ENCODE measurements at regions of chr4 and their contacts with region 1.

Region 1: DNA sequence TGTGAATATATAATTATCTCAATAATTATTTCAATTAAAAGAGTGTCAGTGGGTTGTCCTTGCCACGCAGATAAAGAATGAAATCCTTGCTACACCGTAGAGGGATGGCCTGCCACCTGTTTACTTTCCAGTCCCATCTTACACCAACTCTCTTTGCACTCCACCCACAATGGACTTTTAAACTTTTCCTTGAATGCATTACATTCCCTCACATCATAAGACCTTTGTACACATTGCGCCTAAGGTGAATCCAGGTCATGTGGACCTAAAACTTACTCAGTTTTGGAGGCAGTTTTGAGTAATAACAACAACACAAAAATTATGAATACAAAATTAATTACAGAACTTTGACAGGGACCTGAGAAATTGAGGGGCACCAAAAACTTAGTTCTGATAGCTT is 78.7 kb upstream of the PDE5A start:
- DNase-seq: peak in 1 of 2 experiments; percentile 46
- H3K4me3 ChIP-seq: no peak overlapping the region
- H3K4me3 Mint-ChIP-seq: no peak overlapping the region
- H3K27ac Mint-ChIP-seq: peak overlapping the region; percentile 57
- H3K4me1 ChIP-seq: peaks cover 17% of the 10 kb centered on the region
- H3K4me1 Mint-ChIP-seq: peaks cover 10% of the 10 kb centered on the region
- H3K27me3 ChIP-seq: no peaks in the 10 kb centered on the region
- H3K27me3 Mint-ChIP-seq: no peaks in the 10 kb centered on the region
- CTCF ChIP-seq: no peak

Region 2: DNA sequence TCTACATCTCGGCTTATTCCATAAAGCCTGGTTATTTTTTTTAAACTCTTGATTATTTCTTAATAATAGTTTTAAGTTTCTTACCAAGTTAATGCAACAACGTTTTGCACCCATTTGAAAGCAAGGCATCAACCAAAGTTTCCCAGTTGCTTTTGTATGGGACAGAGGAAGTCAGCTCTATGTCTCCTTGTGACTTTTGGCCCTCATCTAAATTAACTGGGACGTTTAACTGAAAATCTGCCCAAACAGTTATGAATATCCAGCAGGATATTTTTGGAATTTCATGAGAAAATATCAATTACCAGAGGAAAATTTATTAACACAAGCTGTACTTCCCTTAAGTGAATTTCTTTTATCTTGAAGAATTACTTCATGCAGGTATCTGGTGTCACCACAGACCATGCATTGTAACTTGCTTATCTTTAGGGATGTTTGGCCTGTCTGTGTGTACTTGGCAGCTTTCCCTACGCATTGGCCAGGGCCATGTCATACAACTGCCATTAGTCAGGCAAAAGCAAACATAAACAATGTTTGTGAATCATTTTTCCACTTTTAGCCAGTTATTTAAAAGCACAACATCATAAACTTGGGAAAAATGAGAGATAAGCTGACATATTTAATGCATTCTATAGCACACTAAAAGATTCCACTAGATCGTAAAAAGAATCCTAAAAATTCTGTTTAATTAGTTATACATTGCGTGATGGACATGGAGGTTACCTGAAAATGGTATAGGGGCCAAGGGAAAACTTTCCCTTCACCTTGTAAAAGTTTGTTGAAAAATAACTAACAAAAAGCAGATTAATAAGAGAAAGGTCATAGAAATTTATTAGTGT is 22.7 kb after region 1 on chr4:
- CTCF ChIA-PET with region 1: no interaction called
- POLR2A ChIA-PET with region 1: no interaction called
- intact Hi-C with region 1: loop called (anchors 2 kb)
- DNase-seq: peak; percentile 41 to 60
- H3K4me3 ChIP-seq: no peak overlapping the region
- H3K4me3 Mint-ChIP-seq: no peak overlapping the region
- H3K27ac Mint-ChIP-seq: peak overlapping the region; percentile 34
- H3K4me1 ChIP-seq: peaks cover 14% of the 10 kb centered on the region
- H3K4me1 Mint-ChIP-seq: peaks cover 28% of the 10 kb centered on the region
- H3K27me3 ChIP-seq: no peaks in the 10 kb centered on the region
- H3K27me3 Mint-ChIP-seq: no peaks in the 10 kb centered on the region
- CTCF ChIP-seq: no peak

Measured in Caco-2 (cell line).